Astrocyte of the cerebellum (primary cell): ENCODE measurements at regions of chrX and their contacts with region 1.

Region 1: DNA sequence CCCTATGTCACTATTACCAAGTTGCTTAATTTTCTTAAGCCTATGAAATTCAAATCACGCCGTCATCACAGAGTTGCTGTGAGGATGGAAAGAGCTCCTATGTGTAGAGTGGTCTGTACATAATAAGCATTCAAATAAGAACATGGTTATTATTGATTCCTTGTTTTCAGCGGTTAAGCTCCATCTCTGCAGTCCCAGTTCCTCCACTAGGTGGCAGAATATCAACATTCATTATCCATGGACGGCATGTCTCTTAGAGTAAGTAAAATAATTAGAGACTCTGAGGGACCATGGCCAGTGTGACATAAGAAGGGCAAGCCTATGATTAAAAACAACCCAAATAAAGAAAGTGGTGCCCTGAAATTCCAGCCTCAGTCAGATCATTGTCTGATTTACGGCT is 132.5 kb upstream of the NHS start:
- DNase-seq: peak; percentile 36
- H3K4me3 ChIP-seq: no peak overlapping the region
- CTCF ChIP-seq: peak; percentile 70

Region 2: DNA sequence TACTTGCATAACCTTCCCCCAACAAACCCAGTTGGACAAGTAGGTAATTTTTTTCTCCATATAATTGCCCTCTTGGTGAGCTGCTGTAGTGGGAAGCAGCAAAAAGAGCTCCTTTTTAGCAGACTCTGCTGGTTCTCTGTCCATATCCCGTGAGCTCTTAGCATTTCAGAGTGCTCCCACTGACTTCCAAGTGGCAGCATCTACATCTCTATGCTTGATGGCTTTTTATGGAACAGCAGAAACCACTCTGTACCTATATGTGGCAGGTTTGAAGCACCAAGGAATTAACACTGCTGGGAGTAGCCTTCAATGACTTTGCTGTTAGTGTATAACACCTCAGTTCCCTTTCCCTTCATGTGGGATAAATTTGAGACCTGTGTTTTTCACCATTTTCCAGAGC is 35.9 kb before region 1 on chrX:
- in situ Hi-C with region 1: loop called (anchors 5 kb)
- DNase-seq: no peak
- H3K4me3 ChIP-seq: no peak overlapping the region
- CTCF ChIP-seq: no peak

Region 3: GRCh38 chrX:17292132-17292527 is 49.7 kb after region 1 on chrX:
- in situ Hi-C with region 1: no loop called
- DNase-seq: no peak
- H3K4me3 ChIP-seq: no peak overlapping the region
- CTCF ChIP-seq: no peak